ENCODE measurements at regions of chr1 and their contacts with region 1.

Region 1: GRCh38 chr1:91165033-91165654 is 143.3 kb upstream of the ZNF644 start:
- DNase-seq: peak; percentile 95
- ATAC-seq: peak; percentile 96
- H3K4me3 Mint-ChIP-seq: no peak overlapping the region
- H3K27ac Mint-ChIP-seq: no peak overlapping the region
- H3K4me1 Mint-ChIP-seq: peaks cover 29% of the 10 kb centered on the region
- H3K27me3 Mint-ChIP-seq: peaks cover 6% of the 10 kb centered on the region
- CTCF ChIP-seq: peak; percentile 97

Region 2: GRCh38 chr1:90993245-90993644 is 171.9 kb before region 1 on chr1:
- CTCF ChIA-PET with region 1: interaction called, 10 read pairs
- POLR2A ChIA-PET with region 1: no interaction called
- DNase-seq: no peak
- ATAC-seq: no peak
- H3K4me3 Mint-ChIP-seq: no peak overlapping the region
- H3K27ac Mint-ChIP-seq: peak overlapping the region; percentile 64
- H3K4me1 Mint-ChIP-seq: peaks cover 46% of the 10 kb centered on the region
- H3K27me3 Mint-ChIP-seq: no peaks in the 10 kb centered on the region; the same call in 1 of the 2 replicates
- CTCF ChIP-seq: no peak

Region 3: DNA sequence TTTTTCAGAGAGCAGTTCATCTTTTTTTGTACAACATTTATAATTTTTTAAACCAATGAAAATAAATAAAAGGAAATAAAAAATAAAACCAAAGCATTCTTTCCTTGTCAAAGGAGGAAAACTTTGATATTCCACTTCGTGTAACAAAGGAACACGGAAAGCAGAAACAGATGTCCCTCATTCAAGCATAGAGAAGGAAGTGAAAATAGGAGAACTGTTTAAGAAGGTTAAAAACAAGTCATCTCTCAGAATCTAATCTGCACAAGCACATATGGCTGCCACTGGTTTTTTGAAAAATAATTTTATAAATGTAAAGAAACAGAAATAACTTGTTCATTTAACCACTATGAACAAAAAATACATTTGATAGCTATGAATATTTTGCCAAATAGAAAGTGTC is 107.4 kb before region 1 on chr1:
- CTCF ChIA-PET with region 1: interaction called, 10 read pairs
- POLR2A ChIA-PET with region 1: no interaction called
- DNase-seq: no peak
- ATAC-seq: no peak
- H3K4me3 Mint-ChIP-seq: no peak overlapping the region
- H3K27ac Mint-ChIP-seq: no peak overlapping the region
- H3K4me1 Mint-ChIP-seq: peaks cover 4% of the 10 kb centered on the region; the same call in 1 of the 2 replicates
- H3K27me3 Mint-ChIP-seq: peaks cover 4% of the 10 kb centered on the region; the same call in 1 of the 2 replicates
- CTCF ChIP-seq: no peak

Region 4: DNA sequence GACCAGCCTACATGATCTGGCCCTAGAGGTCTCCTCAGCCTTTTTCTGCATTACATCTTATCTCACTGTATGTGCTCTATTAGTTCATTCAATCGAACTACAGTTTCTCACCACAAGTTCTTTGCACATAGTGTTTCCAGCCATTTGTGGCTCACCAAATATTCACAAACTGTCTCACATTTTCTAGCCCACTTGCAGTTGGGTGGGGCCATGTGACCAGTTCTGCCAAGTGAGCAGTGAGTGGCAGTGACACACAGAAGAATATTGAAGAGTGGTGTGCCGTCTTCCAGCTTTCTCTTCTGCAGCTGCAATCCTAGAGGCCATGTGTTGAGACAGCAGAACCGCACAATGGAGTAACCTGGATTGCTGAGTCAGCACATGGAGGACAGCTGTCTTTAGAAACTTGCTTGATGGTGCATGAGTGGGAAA is 40.1 kb before region 1 on chr1:
- CTCF ChIA-PET with region 1: interaction called, 37 read pairs
- POLR2A ChIA-PET with region 1: no interaction called
- DNase-seq: no peak
- ATAC-seq: no peak
- H3K4me3 Mint-ChIP-seq: no peak overlapping the region
- H3K27ac Mint-ChIP-seq: peak overlapping the region; percentile 98
- H3K4me1 Mint-ChIP-seq: peaks cover 70% of the 10 kb centered on the region
- H3K27me3 Mint-ChIP-seq: no peaks in the 10 kb centered on the region
- CTCF ChIP-seq: no peak

Region 5: GRCh38 chr1:91190996-91191395 is 25.9 kb after region 1 on chr1:
- CTCF ChIA-PET with region 1: interaction called, 13 read pairs
- POLR2A ChIA-PET with region 1: no interaction called
- DNase-seq: no peak
- ATAC-seq: no peak
- H3K4me3 Mint-ChIP-seq: no peak overlapping the region
- H3K27ac Mint-ChIP-seq: no peak overlapping the region
- H3K4me1 Mint-ChIP-seq: no peaks in the 10 kb centered on the region
- H3K27me3 Mint-ChIP-seq: no peaks in the 10 kb centered on the region
- CTCF ChIP-seq: no peak

Region 6: DNA sequence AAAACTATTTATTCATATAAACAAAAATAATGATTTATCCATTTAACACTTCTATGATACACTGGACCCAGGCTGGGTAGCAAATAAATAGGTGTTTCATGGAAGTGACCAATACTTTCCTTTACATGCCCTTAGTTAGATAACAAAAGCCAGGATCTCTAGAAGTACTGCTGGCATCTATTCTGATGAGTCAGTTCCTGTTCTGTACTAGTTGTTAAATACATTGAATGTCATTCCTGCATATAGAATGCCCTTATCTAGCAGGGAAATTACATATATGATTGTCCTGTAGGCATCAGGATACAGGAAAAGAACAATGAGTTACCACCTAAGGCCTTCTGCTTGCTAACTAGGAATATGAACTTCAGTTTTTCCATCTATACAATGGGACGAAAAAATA is 108.7 kb after region 1 on chr1:
- CTCF ChIA-PET with region 1: interaction called, 186 read pairs
- POLR2A ChIA-PET with region 1: interaction called, 3 read pairs
- DNase-seq: no peak
- ATAC-seq: no peak
- H3K4me3 Mint-ChIP-seq: no peak overlapping the region
- H3K27ac Mint-ChIP-seq: no peak overlapping the region
- H3K4me1 Mint-ChIP-seq: no peaks in the 10 kb centered on the region
- H3K27me3 Mint-ChIP-seq: no peaks in the 10 kb centered on the region
- CTCF ChIP-seq: no peak